ENCODE measurements at regions of chr9 and their contacts with region 1.

Region 1: GRCh38 chr9:4366591-4367330 is 66.9 kb upstream of the GLIS3 start:
- DNase-seq: peak; percentile 37 to 77 (median 63)
- H3K4me3 ChIP-seq: no peak overlapping the region
- H3K27ac ChIP-seq: no peak overlapping the region
- H3K4me1 ChIP-seq: no peaks in the 10 kb centered on the region
- H3K27me3 ChIP-seq: no peaks in the 10 kb centered on the region
- CTCF ChIP-seq: peak; percentile 63 to 83 (median 78)
- POLR2A ChIP-seq: no peak

Region 2: GRCh38 chr9:3732077-3733038 is 634.4 kb before region 1 on chr9:
- intact Hi-C with region 1: loop called in 1 of 2 experiments (anchors 10 kb)
- DNase-seq: peak; percentile 51 to 71 (median 56)
- H3K4me3 ChIP-seq: peak overlapping the region in 2 of 4 donors; percentile 5 to 48
- H3K27ac ChIP-seq: peak overlapping the region in 2 of 5 donors; percentile 40 to 67
- H3K4me1 ChIP-seq: peaks cover 0 to 11% of the 10 kb centered on the region in 2 donors
- H3K27me3 ChIP-seq: no peaks in the 10 kb centered on the region
- CTCF ChIP-seq: peak; percentile 48 to 77 (median 74)
- POLR2A ChIP-seq: no peak

Region 3: DNA sequence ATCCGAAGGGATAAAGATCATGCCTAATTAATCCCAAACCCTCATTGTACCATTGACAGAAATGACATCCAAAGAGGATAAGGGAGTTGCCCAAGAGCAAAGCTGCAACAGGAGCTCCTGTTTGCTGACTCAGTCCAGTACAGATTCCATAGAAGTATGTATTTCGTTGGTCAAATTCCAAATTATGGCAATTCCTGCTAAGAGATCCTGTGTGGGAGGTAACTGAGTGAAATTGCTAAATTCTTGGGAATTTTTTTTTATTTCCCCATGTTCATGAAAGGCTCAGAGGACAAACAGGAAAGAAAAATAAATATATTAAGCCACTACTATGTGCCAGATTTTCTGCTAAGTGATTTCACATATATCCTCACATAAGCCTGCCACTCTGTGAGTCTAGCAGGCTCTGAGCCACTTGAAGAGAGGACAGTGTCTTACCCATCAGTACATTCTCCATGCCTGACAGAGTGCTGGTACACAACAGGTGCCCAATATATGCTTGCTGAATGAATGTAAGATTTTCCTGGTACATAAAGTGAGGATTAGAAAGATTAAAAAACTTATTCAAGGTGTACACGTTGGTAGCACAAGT is 199.6 kb before region 1 on chr9:
- intact Hi-C with region 1: no loop called
- DNase-seq: no peak
- H3K4me3 ChIP-seq: no peak overlapping the region
- H3K27ac ChIP-seq: no peak overlapping the region
- H3K4me1 ChIP-seq: no peaks in the 10 kb centered on the region
- H3K27me3 ChIP-seq: no peaks in the 10 kb centered on the region
- CTCF ChIP-seq: no peak
- POLR2A ChIP-seq: no peak

Region 4: DNA sequence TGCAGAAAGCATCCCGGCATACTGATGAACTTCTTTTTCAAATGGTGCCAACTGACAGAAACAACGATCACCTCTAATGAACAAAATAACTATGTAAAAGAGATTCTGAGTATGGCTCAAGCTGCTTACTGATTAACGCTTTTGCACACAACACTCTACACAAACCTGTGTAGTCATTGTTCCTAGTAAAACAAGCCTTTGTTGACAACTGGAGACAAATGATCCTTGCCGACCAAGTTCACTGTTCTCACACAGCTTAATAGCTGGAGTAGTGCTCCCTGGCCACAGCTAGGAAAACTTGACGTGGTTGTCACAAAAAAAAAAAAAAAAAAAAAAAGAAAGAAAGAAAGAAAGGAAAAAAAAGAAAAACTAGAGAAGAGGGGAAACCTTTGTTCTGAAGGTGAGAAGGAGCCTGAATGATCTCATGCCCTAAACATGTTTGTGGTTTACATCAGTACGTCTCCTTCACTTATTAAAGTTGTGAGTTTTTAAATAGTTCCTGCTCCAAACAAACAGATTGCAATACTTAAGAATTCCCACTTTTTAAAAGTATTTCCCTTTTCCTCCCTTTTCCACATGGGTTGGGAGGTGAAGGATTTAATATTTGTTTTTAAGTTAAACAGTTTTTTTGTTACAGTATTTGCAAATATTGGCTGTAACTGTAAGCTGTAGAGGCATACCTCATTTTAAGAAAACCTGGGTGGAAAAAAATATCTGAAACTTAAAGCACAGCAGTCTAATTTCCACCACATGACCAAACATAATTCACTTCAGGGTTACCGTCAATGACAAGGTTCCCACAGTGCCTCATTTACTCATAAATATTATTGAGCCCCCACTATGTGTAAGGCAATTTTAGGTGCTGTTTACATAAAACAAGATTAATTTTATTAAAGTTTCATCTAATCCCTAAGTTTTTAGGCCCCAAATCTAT is 130.6 kb before region 1 on chr9:
- intact Hi-C with region 1: no loop called
- DNase-seq: no peak
- H3K4me3 ChIP-seq: no peak overlapping the region
- H3K27ac ChIP-seq: no peak overlapping the region
- H3K4me1 ChIP-seq: no peaks in the 10 kb centered on the region
- H3K27me3 ChIP-seq: no peaks in the 10 kb centered on the region
- CTCF ChIP-seq: no peak
- POLR2A ChIP-seq: no peak

Region 5: GRCh38 chr9:4315582-4316215 is 51.1 kb before region 1 on chr9:
- intact Hi-C with region 1: loop called (anchors 5 kb)
- DNase-seq: peak; percentile 72 to 90 (median 82)
- H3K4me3 ChIP-seq: no peak overlapping the region
- H3K27ac ChIP-seq: no peak overlapping the region
- H3K4me1 ChIP-seq: peaks cover 0 to 4% of the 10 kb centered on the region in 2 donors
- H3K27me3 ChIP-seq: no peaks in the 10 kb centered on the region
- CTCF ChIP-seq: peak; percentile 79 to 91 (median 86)
- POLR2A ChIP-seq: no peak